SK-N-SH (cell line): ENCODE measurements at regions of chr9 and their contacts with region 1.

Region 1: GRCh38 chr9:126781186-126782052 is 23.4 kb upstream of the ZBTB43 start:
- DNase-seq: peak; percentile 93
- H3K4me3 ChIP-seq: no peak overlapping the region; a peak in 1 of 4 replicates
- H3K27ac ChIP-seq: no peak overlapping the region
- H3K4me1 ChIP-seq: peaks cover 0 to 2% of the 10 kb centered on the region in 2 experiments; a peak in 1 of 4 replicates
- H3K27me3 ChIP-seq: peaks cover 12% of the 10 kb centered on the region; the same call in 1 of the 2 replicates
- CTCF ChIP-seq: peak; percentile 93
- EP300 ChIP-seq: no peak
- RAD21 ChIP-seq: peak; percentile 96

Region 2: GRCh38 chr9:126611592-126612325 is 169.7 kb before region 1 on chr9:
- CTCF ChIA-PET with region 1: interaction called, 34 read pairs
- POLR2A ChIA-PET with region 1: no interaction called
- DNase-seq: peak; percentile 94
- H3K4me3 ChIP-seq: peak overlapping the region in 1 of 2 experiments; percentile 36; a peak in 1 of 4 replicates
- H3K27ac ChIP-seq: no peak overlapping the region
- H3K4me1 ChIP-seq: no peaks in the 10 kb centered on the region; a peak in 1 of 4 replicates
- H3K27me3 ChIP-seq: peaks cover 88% of the 10 kb centered on the region
- CTCF ChIP-seq: peak; percentile 70
- EP300 ChIP-seq: no peak
- RAD21 ChIP-seq: peak; percentile 68

Region 3: DNA sequence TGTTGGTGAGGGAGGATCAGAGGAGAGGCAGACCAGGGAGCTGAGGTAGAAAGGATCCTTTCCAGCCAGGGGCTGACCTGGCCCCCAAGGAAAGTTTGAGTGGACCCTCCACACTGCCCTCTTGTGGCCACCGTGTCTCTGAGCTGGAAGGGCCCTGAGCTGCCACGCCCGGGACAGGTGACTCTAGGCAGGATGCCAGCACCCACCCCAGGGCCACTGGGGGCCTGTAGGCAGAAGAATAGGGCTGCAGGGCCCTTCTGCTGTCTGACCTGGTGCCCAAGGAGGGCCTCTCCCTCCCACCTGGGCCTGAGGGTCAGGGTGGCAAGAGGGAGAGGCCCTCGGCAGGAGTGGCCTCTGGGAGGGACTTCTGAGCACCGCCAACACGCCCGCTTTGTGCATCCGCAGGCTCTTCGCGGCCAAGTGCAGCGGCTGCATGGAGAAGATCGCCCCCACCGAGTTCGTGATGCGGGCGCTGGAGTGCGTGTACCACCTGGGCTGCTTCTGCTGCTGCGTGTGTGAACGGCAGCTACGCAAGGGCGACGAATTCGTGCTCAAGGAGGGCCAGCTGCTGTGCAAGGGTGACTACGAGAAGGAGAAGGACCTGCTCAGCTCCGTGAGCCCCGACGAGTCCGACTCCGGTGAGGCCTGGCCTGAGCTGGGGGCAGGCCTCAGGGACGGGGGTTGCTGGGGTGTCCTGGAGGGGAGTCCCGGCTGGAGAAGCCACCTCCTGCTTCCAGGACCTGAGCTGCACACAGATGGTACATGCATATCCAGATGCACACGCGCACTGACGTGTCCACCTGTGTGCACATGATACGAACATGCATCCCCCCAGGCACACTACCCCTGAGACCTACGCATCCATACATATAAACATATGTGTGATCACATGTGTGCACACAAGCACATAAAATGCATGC is 90.7 kb before region 1 on chr9:
- CTCF ChIA-PET with region 1: interaction called, 38 read pairs
- POLR2A ChIA-PET with region 1: no interaction called
- DNase-seq: peak; percentile 82
- H3K4me3 ChIP-seq: no peak overlapping the region; a peak in 1 of 4 replicates
- H3K27ac ChIP-seq: no peak overlapping the region
- H3K4me1 ChIP-seq: no peaks in the 10 kb centered on the region
- H3K27me3 ChIP-seq: peaks cover 44% of the 10 kb centered on the region
- CTCF ChIP-seq: peak; percentile 66
- EP300 ChIP-seq: no peak
- RAD21 ChIP-seq: peak; percentile 50

Region 4: GRCh38 chr9:126715382-126715781 is 66.0 kb before region 1 on chr9:
- CTCF ChIA-PET with region 1: interaction called, 21 read pairs
- POLR2A ChIA-PET with region 1: no interaction called
- DNase-seq: no peak
- H3K4me3 ChIP-seq: no peak overlapping the region
- H3K27ac ChIP-seq: no peak overlapping the region
- H3K4me1 ChIP-seq: peaks cover 10% of the 10 kb centered on the region in 2 experiments; a peak in 2 of 4 replicates
- H3K27me3 ChIP-seq: peaks cover 6% of the 10 kb centered on the region
- CTCF ChIP-seq: no peak
- EP300 ChIP-seq: no peak
- RAD21 ChIP-seq: no peak

Region 5: GRCh38 chr9:126752376-126752775 is 29.0 kb before region 1 on chr9:
- CTCF ChIA-PET with region 1: interaction called, 11 read pairs
- POLR2A ChIA-PET with region 1: no interaction called
- DNase-seq: no peak
- H3K4me3 ChIP-seq: no peak overlapping the region
- H3K27ac ChIP-seq: no peak overlapping the region
- H3K4me1 ChIP-seq: no peaks in the 10 kb centered on the region
- H3K27me3 ChIP-seq: peaks cover 13% of the 10 kb centered on the region
- CTCF ChIP-seq: no peak
- EP300 ChIP-seq: no peak
- RAD21 ChIP-seq: no peak

Region 6: GRCh38 chr9:126885131-126885641 is 103.8 kb after region 1 on chr9:
- CTCF ChIA-PET with region 1: no interaction called
- POLR2A ChIA-PET with region 1: no interaction called
- DNase-seq: no peak
- H3K4me3 ChIP-seq: no peak overlapping the region
- H3K27ac ChIP-seq: no peak overlapping the region
- H3K4me1 ChIP-seq: no peaks in the 10 kb centered on the region; a peak in 1 of 4 replicates
- H3K27me3 ChIP-seq: no peaks in the 10 kb centered on the region
- CTCF ChIP-seq: no peak
- EP300 ChIP-seq: no peak
- RAD21 ChIP-seq: no peak